Right lobe of liver (tissue), 6 donors: ENCODE measurements at regions of chr1 and their contacts with region 1.

Region 1: GRCh38 chr1:9784508-9785133 is 39.1 kb downstream of the CLSTN1 start:
- DNase-seq: peak in 1 of 3 donors; percentile 57
- ATAC-seq: peak; percentile 77 to 85 (median 80)
- H3K4me3 ChIP-seq: no peak overlapping the region
- H3K27ac ChIP-seq: no peak overlapping the region
- H3K4me1 ChIP-seq: no peaks in the 10 kb centered on the region
- H3K27me3 ChIP-seq: no peaks in the 10 kb centered on the region
- CTCF ChIP-seq: peak; percentile 68 to 76 (median 72)
- POLR2A ChIP-seq: no peak

Region 2: DNA sequence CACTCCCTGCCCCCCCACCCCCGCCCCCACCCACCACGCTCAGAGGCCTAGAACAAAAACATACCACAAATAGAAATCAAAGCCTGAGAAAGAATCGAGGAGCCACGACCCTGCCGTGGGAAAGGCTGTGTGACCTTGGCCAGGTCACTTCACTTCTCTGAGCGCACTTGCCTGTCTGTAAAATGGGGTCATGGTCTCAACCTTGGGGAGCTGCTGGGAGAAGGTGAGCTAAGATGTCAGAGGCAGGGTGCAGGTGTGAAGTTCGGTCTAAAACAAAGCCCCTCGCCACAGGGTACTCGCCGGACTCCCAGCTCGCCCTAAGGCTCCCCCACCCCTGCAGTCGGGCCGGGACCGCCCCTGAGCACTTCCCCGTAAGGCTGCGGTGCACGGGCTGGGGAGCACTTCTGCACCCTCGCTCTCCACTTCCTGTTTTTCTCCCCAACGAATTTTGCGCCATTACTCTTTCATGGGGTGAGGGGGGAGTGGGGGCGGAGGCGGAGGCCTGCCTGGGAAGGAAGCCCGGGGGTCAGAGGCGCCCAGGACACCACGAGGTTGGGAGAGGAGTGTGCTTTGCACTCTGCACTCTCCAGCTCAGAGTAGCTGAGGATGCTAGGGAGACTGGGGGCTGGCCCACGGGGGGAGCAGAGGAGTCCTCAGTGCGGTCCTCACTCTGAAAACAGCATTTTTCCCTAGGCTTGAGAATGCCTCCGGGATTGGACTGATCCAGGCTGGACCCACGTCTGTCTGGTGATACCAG is 155.0 kb before region 1 on chr1:
- intact Hi-C with region 1: no loop called
- DNase-seq: peak; percentile 62 to 81 (median 71)
- ATAC-seq: peak; percentile 48 to 58 (median 52)
- H3K4me3 ChIP-seq: no peak overlapping the region
- H3K27ac ChIP-seq: no peak overlapping the region
- H3K4me1 ChIP-seq: peaks cover 0 to 3% (median 0%) of the 10 kb centered on the region in 4 donors
- H3K27me3 ChIP-seq: no peaks in the 10 kb centered on the region
- CTCF ChIP-seq: no peak
- POLR2A ChIP-seq: no peak

Region 3: DNA sequence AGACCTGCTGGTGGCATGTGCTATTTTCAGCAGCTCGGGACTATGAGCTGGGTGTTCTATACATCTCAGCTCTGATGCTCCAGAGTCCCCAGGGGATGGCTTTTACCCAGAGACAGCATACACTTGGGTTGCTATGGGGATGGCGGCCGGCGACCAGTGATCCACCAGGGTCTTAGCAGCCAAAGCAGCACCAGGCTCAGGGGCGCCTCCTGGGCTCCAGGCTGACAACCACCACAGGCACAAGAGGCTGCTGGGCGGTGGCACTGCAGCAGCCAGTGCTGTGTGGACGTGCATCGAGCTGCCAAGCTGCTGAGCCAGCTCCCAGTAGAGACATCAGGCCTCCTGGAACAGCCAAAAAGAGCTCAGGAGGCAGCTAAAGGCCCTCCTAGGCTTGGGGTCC is 76.7 kb after region 1 on chr1:
- intact Hi-C with region 1: loop called (anchors 5 kb)
- DNase-seq: no peak
- ATAC-seq: no peak
- H3K4me3 ChIP-seq: no peak overlapping the region
- H3K27ac ChIP-seq: no peak overlapping the region
- H3K4me1 ChIP-seq: no peaks in the 10 kb centered on the region
- H3K27me3 ChIP-seq: no peaks in the 10 kb centered on the region
- CTCF ChIP-seq: no peak
- POLR2A ChIP-seq: no peak

Region 4: DNA sequence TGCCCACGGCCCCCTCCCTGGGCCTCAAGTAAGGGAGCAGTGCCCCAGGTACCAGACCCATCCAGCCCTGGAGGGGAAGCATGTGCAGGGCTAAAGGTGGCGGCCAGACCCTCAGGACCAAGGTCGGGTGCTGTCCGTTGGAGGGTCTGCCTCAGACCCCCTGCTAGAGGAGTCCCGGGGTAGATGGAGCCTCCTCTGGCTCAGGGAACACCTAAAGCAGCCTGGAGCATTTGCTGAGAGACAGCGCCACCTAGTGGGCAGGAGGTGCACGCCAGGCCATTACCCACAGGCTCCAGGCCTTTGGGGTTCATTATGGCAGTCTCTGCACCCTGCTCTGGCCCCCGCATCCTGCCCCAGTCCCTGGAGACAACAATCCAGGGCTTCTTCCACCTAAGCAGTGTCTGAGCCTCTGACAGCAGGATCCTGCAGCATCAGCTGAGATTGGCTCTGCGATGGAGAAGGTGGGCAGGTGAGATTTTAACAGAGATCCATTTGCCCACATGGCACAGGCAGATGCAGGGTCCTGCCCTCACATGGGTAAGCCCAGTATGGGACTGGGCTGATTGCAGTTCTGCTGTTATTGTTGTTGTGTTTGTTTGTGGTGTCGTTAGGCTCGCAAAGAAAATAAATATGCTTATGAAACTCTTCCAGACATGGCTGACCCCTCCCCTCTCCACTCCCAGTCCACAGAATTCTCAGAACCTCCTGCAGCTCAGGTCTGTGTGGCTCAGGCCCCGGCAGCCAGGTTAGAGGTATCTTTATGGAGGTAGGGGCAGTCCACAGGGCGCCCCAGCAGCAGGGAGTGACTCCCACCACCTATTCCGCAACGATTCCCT is 83.0 kb after region 1 on chr1:
- intact Hi-C with region 1: loop called (anchors 5 kb)
- DNase-seq: peak; percentile 77 to 83 (median 80)
- ATAC-seq: peak; percentile 81 to 91 (median 88)
- H3K4me3 ChIP-seq: no peak overlapping the region
- H3K27ac ChIP-seq: no peak overlapping the region
- H3K4me1 ChIP-seq: peaks cover 0 to 14% (median 8%) of the 10 kb centered on the region in 4 donors
- H3K27me3 ChIP-seq: no peaks in the 10 kb centered on the region
- CTCF ChIP-seq: peak; percentile 95 to 100 (median 98)
- POLR2A ChIP-seq: no peak